Dendritic cell treated with granulocyte-macrophage colony-stimulating factor and Interleukin-4, amounts not matched to agents 40 ng/mL and 50 ng/mL, for 4 days (primary cell): ENCODE measurements at regions of chr12 and their contacts with region 1.

Region 1: GRCh38 chr12:53575502-53576253 is 50.5 kb downstream of the ATF7 start:
- H3K4me3 Mint-ChIP-seq: no peak overlapping the region
- H3K27ac Mint-ChIP-seq: peak overlapping the region; percentile 84
- H3K4me1 Mint-ChIP-seq: peaks cover 66% of the 10 kb centered on the region
- H3K27me3 Mint-ChIP-seq: no peaks in the 10 kb centered on the region

Region 2: GRCh38 chr12:53213348-53213747 is 362.3 kb before region 1 on chr12:
- intact Hi-C with region 1: no loop called
- H3K4me3 Mint-ChIP-seq: no peak overlapping the region
- H3K27ac Mint-ChIP-seq: no peak overlapping the region
- H3K4me1 Mint-ChIP-seq: peaks cover 76% of the 10 kb centered on the region
- H3K27me3 Mint-ChIP-seq: no peaks in the 10 kb centered on the region

Region 3: GRCh38 chr12:53618275-53618674 is 42.6 kb after region 1 on chr12:
- intact Hi-C with region 1: loop called (anchors 5 kb)
- H3K4me3 Mint-ChIP-seq: peak overlapping the region; percentile 74
- H3K27ac Mint-ChIP-seq: peak overlapping the region; percentile 88
- H3K4me1 Mint-ChIP-seq: peaks cover 41% of the 10 kb centered on the region
- H3K27me3 Mint-ChIP-seq: no peaks in the 10 kb centered on the region